ENCODE measurements at regions of chr9 and their contacts with region 1.

Region 1: DNA sequence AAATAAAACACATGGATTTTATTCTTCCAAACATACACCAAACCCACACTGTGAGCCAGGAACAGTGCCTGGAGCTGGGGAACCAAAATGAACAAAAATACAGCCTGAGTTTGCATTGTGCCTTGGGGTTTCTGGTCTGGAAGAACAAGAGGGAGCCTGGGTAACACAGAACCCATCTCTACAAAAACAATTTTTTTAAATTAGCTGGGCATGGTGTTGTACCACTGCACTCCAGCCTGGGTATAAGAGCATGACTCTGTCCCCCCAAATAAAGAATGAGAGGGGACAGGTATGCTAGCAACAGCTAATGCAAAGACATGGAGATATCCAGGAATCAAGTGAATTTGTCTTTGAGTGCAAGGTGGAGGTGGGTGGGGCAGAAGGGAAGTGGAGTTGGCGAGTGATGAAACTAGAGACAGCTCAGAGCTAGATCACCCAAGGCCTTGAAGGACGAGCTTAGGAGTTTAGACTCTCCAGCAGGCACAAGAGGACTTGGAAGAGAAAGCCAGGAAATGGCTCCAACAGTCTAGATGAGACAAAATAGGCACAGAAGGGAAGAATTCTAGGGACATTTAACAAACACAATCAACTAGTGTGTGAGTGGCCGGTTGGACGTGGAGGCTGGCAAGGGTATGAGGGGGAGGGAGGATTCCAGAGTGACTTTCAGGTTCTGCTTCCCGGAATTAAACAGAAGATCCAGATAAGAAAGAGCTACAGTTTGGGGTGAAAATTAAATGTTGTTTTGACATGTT is 47.4 kb downstream of the FNBP1 start:
- DNase-seq: peak; percentile 68
- H3K4me3 Mint-ChIP-seq: peak overlapping the region; percentile 64
- H3K27ac Mint-ChIP-seq: peak overlapping the region; percentile 96
- H3K4me1 Mint-ChIP-seq: peaks cover 82% of the 10 kb centered on the region
- H3K27me3 Mint-ChIP-seq: no peaks in the 10 kb centered on the region

Region 2: GRCh38 chr9:128552153-128552743 is 1443.3 kb before region 1 on chr9 and contains the start of gene SPTAN1:
- CTCF ChIA-PET with region 1: no interaction called
- POLR2A ChIA-PET with region 1: no interaction called
- intact Hi-C with region 1: no loop called
- DNase-seq: peak; percentile 97
- H3K4me3 Mint-ChIP-seq: peak within 1 kb of the TSS; percentile 96
- H3K27ac Mint-ChIP-seq: peak within 1 kb of the TSS; percentile 95
- H3K4me1 Mint-ChIP-seq: peaks cover 32% of the 10 kb centered on the region
- H3K27me3 Mint-ChIP-seq: no peaks in the 10 kb centered on the region
- total RNA-seq, gene SPTAN1: 228 TPM

Region 3: GRCh38 chr9:129932303-129933151 is 63.1 kb before region 1 on chr9:
- CTCF ChIA-PET with region 1: no interaction called
- POLR2A ChIA-PET with region 1: interaction called, 4 read pairs
- intact Hi-C with region 1: loop called (anchors 2 kb)
- DNase-seq: no peak
- H3K4me3 Mint-ChIP-seq: peak overlapping the region; percentile 48
- H3K27ac Mint-ChIP-seq: peak overlapping the region; percentile 87
- H3K4me1 Mint-ChIP-seq: peaks cover 67% of the 10 kb centered on the region
- H3K27me3 Mint-ChIP-seq: no peaks in the 10 kb centered on the region

Region 4: GRCh38 chr9:130010151-130010988 is 14.8 kb after region 1 on chr9:
- CTCF ChIA-PET with region 1: interaction called, 7 read pairs
- POLR2A ChIA-PET with region 1: interaction called, 60 read pairs
- intact Hi-C with region 1: loop called (anchors 1 kb)
- DNase-seq: peak; percentile 71
- H3K4me3 Mint-ChIP-seq: peak overlapping the region; percentile 61
- H3K27ac Mint-ChIP-seq: peak overlapping the region; percentile 93
- H3K4me1 Mint-ChIP-seq: peaks cover 84% of the 10 kb centered on the region
- H3K27me3 Mint-ChIP-seq: no peaks in the 10 kb centered on the region

Region 5: DNA sequence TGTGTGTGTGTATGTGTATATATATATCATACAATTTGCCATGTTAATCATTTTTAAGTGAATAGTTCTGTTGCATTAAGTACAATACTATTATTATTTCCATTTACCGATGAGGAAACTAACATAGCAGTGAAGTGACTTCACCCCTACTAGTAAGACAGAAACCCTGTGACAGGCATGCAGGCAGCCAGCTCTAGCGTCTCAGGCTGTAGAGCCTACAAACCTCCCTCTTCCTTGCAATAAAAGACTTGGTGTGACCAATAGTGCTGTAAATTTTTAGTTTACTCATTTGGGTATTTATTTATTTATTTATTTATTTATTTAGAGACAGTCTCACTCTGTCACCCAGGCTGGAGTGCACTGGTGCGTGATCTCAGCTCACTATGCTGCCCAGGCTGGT is 22.7 kb after region 1 on chr9:
- CTCF ChIA-PET with region 1: interaction called, 4 read pairs
- POLR2A ChIA-PET with region 1: interaction called, 18 read pairs
- intact Hi-C with region 1: no loop called
- DNase-seq: peak; percentile 58
- H3K4me3 Mint-ChIP-seq: no peak overlapping the region
- H3K27ac Mint-ChIP-seq: peak overlapping the region; percentile 76
- H3K4me1 Mint-ChIP-seq: peaks cover 77% of the 10 kb centered on the region
- H3K27me3 Mint-ChIP-seq: no peaks in the 10 kb centered on the region

Region 6: DNA sequence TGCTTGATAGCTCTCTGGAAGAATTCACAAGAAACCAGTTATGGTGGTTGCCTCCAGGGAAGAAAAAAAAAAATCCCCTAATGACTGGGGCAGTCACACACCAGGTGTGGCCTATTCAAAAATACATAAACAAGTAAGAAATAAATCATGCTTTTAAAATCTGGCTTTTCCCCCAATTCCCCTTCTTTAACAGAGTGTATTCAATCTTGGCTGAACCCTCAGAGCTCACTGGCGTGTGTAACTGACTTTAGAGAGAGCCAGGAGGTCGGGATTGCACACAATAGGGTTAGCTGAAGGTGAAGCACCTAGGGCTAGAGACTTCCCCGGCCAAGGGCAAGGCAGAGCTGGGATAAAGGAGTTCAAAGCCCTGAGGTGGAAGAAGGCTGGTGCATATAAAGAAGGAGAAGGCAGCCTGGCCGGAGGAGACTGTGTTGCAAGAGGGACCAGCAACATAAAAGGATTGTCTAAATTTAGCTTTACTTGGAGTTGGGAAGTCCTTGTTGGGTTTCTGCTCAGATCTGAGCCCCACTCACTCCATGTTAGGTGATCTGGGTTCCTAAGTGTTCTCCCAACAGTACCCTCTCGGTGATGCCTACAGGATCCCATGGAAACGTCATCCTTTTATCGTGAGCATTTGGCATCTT is 27.7 kb after region 1 on chr9:
- CTCF ChIA-PET with region 1: interaction called, 3 read pairs
- POLR2A ChIA-PET with region 1: interaction called, 55 read pairs
- intact Hi-C with region 1: no loop called
- DNase-seq: no peak
- H3K4me3 Mint-ChIP-seq: peak overlapping the region; percentile 51
- H3K27ac Mint-ChIP-seq: peak overlapping the region; percentile 96
- H3K4me1 Mint-ChIP-seq: peaks cover 93% of the 10 kb centered on the region
- H3K27me3 Mint-ChIP-seq: no peaks in the 10 kb centered on the region

Region 7: GRCh38 chr9:130029223-130029973 is 33.8 kb after region 1 on chr9:
- CTCF ChIA-PET with region 1: interaction called, 3 read pairs
- POLR2A ChIA-PET with region 1: interaction called, 55 read pairs
- intact Hi-C with region 1: loop called (anchors 1 kb)
- DNase-seq: peak; percentile 77
- H3K4me3 Mint-ChIP-seq: peak overlapping the region; percentile 33
- H3K27ac Mint-ChIP-seq: peak overlapping the region; percentile 92
- H3K4me1 Mint-ChIP-seq: peaks cover 94% of the 10 kb centered on the region
- H3K27me3 Mint-ChIP-seq: no peaks in the 10 kb centered on the region

Measured in activated CD4-positive, alpha-beta memory T cell treated with anti-CD3 and anti-CD28 coated beads for 36 hours (primary cell).